ENCODE measurements at regions of chr1 and their contacts with region 1.

Region 1: DNA sequence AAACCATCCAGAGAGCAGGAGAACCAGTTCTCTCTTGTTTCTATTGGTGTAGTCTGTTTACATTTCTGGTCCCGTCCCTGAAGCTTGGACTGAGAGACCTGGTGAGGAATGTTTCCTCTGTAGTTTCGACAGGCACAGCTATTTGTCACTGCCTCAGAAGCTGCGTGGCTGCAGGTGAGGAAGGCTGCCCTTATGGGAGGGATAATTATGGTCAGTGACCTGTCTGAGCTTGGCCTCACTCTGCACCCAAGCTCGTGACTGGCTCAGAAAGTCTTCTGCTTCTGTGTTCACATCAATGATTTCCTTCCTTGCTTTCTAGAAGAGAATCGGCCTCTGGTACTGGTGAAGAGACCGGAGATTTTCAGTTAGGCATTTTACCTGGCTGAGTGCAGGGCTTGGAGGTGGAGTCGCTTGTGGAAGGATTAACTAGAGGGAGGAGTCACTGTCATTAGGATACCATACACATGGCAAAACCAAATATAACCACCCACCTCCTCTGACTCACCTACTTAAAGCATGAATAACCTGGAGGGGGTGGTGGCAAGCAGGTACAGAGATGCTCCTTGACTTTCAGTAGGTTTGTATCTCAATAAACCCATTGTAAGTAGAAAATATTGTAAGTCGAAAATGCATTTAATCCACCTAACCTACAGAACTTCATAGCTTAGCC is 19.9 kb upstream of the WDR26 start:
- DNase-seq: no peak
- ATAC-seq: no peak
- H3K4me3 Mint-ChIP-seq: no peak overlapping the region
- H3K27ac Mint-ChIP-seq: no peak overlapping the region
- H3K4me1 Mint-ChIP-seq: peaks cover 13% of the 10 kb centered on the region
- H3K27me3 Mint-ChIP-seq: no peaks in the 10 kb centered on the region
- CTCF ChIP-seq: no peak

Region 2: DNA sequence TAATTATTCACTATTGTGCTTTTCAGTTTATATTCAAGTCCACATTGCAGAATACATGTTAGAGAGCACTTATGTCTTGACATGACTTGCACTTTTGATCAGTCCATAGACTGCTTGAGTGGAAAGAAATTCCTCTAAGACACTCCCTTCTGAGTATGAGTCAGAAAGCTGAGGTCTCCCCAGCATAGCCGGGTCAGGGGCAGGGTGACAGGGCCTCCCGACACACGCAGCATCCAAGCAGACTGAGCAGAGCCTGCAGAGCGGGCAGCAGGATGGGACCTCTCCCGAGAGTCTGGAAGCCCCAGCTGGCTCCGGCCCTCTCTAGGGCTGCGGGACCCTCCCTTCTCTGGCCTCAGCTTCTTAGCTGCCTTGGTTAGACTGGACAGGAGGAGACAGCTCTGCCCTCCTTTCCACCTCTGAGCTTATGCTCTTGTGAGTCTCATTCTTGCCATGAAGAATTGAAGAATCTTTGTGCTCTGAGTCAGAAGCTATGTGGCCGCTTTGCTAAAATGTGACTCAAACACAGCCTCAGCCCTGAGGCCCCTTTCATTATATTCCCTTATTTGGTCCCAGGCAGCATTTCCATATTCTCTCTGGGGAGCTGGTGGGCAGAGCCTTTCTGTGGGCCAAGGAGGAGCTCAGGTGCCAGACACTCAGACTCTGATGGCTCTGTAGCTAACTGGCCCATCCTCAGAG is 753.4 kb before region 1 on chr1:
- CTCF ChIA-PET with region 1: interaction called, 3 read pairs
- POLR2A ChIA-PET with region 1: no interaction called
- intact Hi-C with region 1: loop called (anchors 1 kb)
- DNase-seq: no peak
- ATAC-seq: no peak
- H3K4me3 Mint-ChIP-seq: no peak overlapping the region
- H3K27ac Mint-ChIP-seq: no peak overlapping the region
- H3K4me1 Mint-ChIP-seq: peaks cover 9% of the 10 kb centered on the region
- H3K27me3 Mint-ChIP-seq: peaks cover 13% of the 10 kb centered on the region
- CTCF ChIP-seq: no peak

Region 3: DNA sequence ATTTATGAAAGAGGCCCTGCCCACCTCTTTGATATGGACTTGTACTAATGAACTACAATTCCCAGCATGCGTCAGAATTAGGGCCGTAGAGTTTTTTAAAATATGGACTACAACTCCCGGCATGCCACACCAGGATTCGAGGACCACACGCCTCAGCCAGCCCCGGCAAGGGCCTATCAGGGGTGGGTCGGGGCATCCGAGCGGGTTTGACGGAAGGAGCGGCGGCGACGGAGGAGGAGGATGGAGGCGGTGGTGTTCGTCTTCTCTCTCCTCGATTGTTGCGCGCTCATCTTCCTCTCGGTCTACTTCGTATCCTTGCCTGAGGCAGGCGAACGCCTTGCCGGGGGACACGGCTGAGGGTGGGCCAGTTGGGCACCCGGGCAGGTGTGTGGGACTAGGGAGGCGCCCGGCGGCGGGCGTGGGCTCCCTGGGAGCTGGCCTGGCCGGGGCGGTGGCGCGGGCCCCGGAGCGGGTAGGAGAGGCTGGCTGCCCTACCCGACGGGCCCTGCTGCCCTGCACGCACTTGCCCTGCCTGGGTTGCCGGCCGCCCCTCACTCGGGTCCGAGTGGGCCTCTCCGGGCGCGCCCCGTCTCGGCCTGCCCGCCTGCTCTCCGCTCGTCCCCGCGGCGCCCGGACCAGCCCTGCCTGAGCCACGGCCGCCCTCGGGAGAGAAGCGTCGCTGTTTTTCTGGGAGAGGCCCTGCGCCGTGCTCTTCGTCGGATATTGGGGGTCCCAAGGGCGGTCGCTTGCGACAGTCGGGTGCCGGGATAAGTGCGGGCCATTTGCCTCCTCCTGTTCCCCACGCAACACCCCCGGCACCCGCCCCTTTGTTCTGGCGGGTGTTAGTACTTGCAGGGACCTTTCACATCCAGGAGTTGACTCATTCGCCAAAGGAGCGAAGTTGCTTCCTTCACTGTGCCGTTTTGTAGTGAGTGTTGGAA is 97.6 kb before region 1 on chr1 and contains the start of gene CNIH4:
- CTCF ChIA-PET with region 1: no interaction called
- POLR2A ChIA-PET with region 1: no interaction called
- intact Hi-C with region 1: loop called (anchors 1 kb)
- DNase-seq: peak; percentile 76
- ATAC-seq: peak; percentile 99
- H3K4me3 Mint-ChIP-seq: peak within 1 kb of the TSS; percentile 91
- H3K27ac Mint-ChIP-seq: peak within 1 kb of the TSS; percentile 81
- H3K4me1 Mint-ChIP-seq: peaks cover 24% of the 10 kb centered on the region
- H3K27me3 Mint-ChIP-seq: no peaks in the 10 kb centered on the region
- CTCF ChIP-seq: no peak
- total RNA-seq, gene CNIH4: 16.2 and 21.0 TPM in 2 replicates

Region 4: DNA sequence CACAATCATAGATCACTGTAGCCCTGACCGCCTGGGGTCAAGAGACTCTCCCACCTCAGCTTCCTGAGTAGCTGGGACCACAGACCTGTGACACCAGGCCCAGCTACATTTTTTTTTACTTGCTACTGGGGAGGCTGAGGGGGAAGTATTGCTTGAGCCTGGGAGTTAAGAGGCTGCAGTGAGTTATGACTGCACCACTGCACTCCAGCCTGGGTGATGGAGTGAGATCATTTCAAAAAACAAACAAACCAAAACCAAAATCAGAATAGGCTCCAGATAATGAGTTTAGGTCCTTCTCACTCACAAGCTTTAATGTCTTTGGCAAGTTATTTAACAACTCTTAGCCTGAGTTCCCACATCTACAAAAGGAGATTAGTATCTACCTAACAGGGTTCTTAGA is 42.8 kb before region 1 on chr1:
- CTCF ChIA-PET with region 1: no interaction called
- POLR2A ChIA-PET with region 1: no interaction called
- intact Hi-C with region 1: loop called (anchors 5 kb)
- DNase-seq: no peak
- ATAC-seq: no peak
- H3K4me3 Mint-ChIP-seq: no peak overlapping the region
- H3K27ac Mint-ChIP-seq: no peak overlapping the region
- H3K4me1 Mint-ChIP-seq: no peaks in the 10 kb centered on the region
- H3K27me3 Mint-ChIP-seq: no peaks in the 10 kb centered on the region
- CTCF ChIP-seq: no peak

Region 5: DNA sequence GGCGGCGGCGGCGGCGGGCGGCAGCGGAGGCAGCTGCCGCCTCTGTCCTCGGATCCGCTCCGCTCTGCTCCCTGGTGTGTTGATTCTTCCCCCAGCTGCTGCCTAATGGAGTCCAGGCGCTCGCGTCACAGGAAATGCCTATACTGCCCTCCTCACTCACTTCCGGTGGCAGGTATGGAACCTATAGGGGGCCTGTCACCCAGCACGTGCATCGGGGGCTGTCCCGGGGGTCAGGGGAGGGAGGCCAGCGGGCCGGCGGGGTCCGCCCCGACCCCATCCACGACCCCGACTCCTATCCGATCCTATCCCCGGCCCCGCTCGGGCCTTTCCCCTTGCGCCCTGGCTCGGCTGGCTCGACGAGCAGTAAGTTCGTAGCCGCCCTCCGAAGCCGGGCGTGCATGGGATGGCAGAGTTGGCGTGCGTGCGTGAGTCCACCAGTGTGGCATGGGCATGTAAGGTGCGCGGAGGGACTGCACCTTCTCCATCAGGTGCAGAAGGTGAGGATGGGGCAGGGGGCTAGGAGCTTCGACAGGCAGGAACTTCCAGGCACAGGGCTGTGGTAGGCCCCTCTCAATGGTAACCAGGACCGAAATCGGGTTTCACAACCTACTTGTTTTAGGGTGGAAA is 19.7 kb before region 1 on chr1 and contains the start of gene WDR26:
- CTCF ChIA-PET with region 1: interaction called, 6 read pairs
- POLR2A ChIA-PET with region 1: interaction called, 7 read pairs
- intact Hi-C with region 1: loop called (anchors 1 kb)
- DNase-seq: peak; percentile 74
- ATAC-seq: peak; percentile 85
- H3K4me3 Mint-ChIP-seq: peak within 1 kb of the TSS; percentile 96
- H3K27ac Mint-ChIP-seq: peak within 1 kb of the TSS; percentile 97
- H3K4me1 Mint-ChIP-seq: peaks cover 47% of the 10 kb centered on the region
- H3K27me3 Mint-ChIP-seq: no peaks in the 10 kb centered on the region
- CTCF ChIP-seq: no peak
- total RNA-seq, gene WDR26: 75.3 and 91.3 TPM in 2 replicates